Motor neuron (in vitro differentiated cells): ENCODE measurements at regions of chr1 and their contacts with region 1.

Region 1: DNA sequence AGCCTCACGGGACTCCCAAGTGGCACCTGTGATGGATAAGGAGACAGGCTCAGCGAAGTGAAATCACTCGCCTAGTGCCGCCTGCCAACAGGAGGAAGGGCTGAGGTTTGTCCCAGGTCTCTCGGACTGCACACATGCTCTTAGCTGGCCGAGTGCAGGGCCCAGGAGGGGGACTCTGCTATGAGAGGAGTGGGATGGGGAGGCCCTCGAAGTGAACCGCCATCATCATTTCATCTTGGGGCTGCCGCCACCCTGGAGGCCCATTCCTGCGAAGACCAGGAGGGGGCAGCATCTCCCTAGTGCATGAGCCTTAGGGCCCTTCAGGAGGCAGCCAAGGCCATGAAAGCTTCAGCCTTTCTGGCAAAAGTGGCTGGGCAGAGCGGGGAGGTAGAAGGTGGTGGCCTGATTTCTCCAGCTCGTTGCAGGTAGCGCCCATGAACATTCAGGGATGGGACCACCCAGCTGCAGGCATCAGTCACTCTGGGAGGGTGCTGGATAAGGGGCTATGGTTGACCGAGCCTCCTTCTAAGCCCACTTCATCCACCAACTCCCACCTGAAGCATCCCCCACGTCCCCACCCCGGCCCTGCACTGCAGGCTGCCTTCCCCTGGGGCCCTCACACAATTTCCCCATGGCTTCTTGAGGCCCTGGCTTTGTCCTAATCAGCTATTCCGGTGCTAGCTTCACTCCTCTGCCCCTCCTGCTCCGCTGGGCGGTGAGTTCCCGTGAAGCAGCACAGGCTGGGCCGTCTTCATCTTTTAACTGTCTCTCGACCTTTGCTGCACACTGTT is 17.2 kb upstream of the RASSF5 start:
- ATAC-seq: peak; percentile 79 to 98 (median 90)
- H3K4me3 ChIP-seq: no peak overlapping the region
- H3K27ac ChIP-seq: no peak overlapping the region
- H3K4me1 ChIP-seq: peaks cover 9 to 12% of the 10 kb centered on the region in 2 donors

Region 2: GRCh38 chr1:206583707-206584648 is 93.8 kb after region 1 on chr1:
- in situ Hi-C with region 1: loop called in 8 of 9 experiments (anchors 5 to 25 kb)
- ATAC-seq: peak; percentile 41 to 80 (median 72)
- H3K4me3 ChIP-seq: no peak overlapping the region
- H3K27ac ChIP-seq: no peak overlapping the region
- H3K4me1 ChIP-seq: peaks cover 0 to 2% of the 10 kb centered on the region in 2 donors

Region 3: GRCh38 chr1:206589206-206589605 is 99.0 kb after region 1 on chr1:
- in situ Hi-C with region 1: loop called in 8 of 9 experiments (anchors 5 to 25 kb)
- ATAC-seq: peak in 3 of 8 experiments; percentile 10 to 13 (median 12)
- H3K4me3 ChIP-seq: no peak overlapping the region
- H3K27ac ChIP-seq: no peak overlapping the region
- H3K4me1 ChIP-seq: no peaks in the 10 kb centered on the region

Region 4: GRCh38 chr1:206851341-206852010 is 361.3 kb after region 1 on chr1:
- in situ Hi-C with region 1: no loop called
- ATAC-seq: peak in 1 of 8 experiments; percentile 67
- H3K4me3 ChIP-seq: no peak overlapping the region
- H3K27ac ChIP-seq: no peak overlapping the region
- H3K4me1 ChIP-seq: no peaks in the 10 kb centered on the region